Activated CD8-positive, alpha-beta T cell treated with anti-CD3 and anti-CD28 coated beads for 36 hours (primary cell): ENCODE measurements at regions of chr10 and their contacts with region 1.

Region 1: GRCh38 chr10:119750391-119751230 is 24.8 kb downstream of the INPP5F start:
- DNase-seq: peak; percentile 77
- ATAC-seq: peak; percentile 99
- H3K4me3 Mint-ChIP-seq: no peak overlapping the region
- H3K27ac Mint-ChIP-seq: no peak overlapping the region
- H3K4me1 Mint-ChIP-seq: peaks cover 7% of the 10 kb centered on the region
- H3K27me3 Mint-ChIP-seq: no peaks in the 10 kb centered on the region
- CTCF ChIP-seq: peak; percentile 94

Region 2: GRCh38 chr10:119496273-119496672 is 254.3 kb before region 1 on chr10:
- CTCF ChIA-PET with region 1: no interaction called
- POLR2A ChIA-PET with region 1: no interaction called
- intact Hi-C with region 1: no loop called
- DNase-seq: peak; percentile 85
- ATAC-seq: peak; percentile 77
- H3K4me3 Mint-ChIP-seq: no peak overlapping the region
- H3K27ac Mint-ChIP-seq: peak overlapping the region; percentile 98
- H3K4me1 Mint-ChIP-seq: peaks cover 89% of the 10 kb centered on the region
- H3K27me3 Mint-ChIP-seq: no peaks in the 10 kb centered on the region
- CTCF ChIP-seq: no peak

Region 3: DNA sequence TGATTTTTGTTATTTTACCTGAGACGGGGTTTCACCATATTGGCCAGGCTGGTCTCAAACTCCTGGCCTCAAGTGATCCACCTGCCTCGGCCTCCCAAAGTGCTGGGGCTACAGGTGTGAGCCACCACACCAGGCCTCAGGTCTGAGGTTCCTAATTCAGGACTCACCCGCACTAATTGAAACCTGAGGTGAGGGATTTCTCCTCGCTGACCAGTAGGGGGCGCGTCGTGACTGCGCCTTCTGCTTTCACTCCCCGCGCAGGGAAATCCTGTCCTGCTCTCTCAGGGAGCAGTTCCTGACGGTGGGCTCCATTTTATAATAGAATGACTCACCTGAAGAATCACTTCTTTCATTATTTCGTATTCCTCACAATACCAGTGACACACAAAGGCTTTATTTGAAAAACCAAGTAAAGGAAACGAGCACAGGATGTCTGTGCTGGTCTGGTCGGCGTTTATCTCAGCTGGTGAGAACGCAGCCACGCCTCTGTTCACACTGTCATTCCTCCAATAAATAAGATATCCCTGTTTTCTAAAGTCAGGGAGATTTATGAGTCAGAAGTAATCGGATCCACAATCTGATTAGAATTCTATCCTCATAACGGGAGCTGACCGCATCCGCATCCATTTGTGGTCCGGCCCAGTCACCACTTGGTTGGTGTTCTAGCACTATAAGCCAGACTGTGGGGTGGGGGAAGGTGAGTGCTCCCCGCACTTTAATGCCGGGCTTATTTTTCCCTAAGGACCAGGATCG is 64.0 kb before region 1 on chr10:
- CTCF ChIA-PET with region 1: interaction called, 46 read pairs
- POLR2A ChIA-PET with region 1: no interaction called
- intact Hi-C with region 1: no loop called
- DNase-seq: peak; percentile 86
- ATAC-seq: peak; percentile 89
- H3K4me3 Mint-ChIP-seq: peak overlapping the region; percentile 21
- H3K27ac Mint-ChIP-seq: peak overlapping the region; percentile 77
- H3K4me1 Mint-ChIP-seq: peaks cover 20% of the 10 kb centered on the region
- H3K27me3 Mint-ChIP-seq: no peaks in the 10 kb centered on the region
- CTCF ChIP-seq: peak; percentile 98

Region 4: GRCh38 chr10:119725828-119726675 is 24.6 kb before region 1 on chr10 and contains the start of gene INPP5F:
- CTCF ChIA-PET with region 1: interaction called, 42 read pairs
- POLR2A ChIA-PET with region 1: no interaction called
- intact Hi-C with region 1: no loop called
- DNase-seq: peak; percentile 99
- ATAC-seq: peak; percentile 98
- H3K4me3 Mint-ChIP-seq: peak within 1 kb of the TSS; percentile 82
- H3K27ac Mint-ChIP-seq: peak within 1 kb of the TSS; percentile 76
- H3K4me1 Mint-ChIP-seq: peaks cover 41% of the 10 kb centered on the region
- H3K27me3 Mint-ChIP-seq: no peaks in the 10 kb centered on the region
- CTCF ChIP-seq: peak; percentile 43
- total RNA-seq, gene INPP5F: 10.7 TPM

Region 5: GRCh38 chr10:119761106-119761505 is 10.5 kb after region 1 on chr10:
- CTCF ChIA-PET with region 1: interaction called, 13 read pairs
- POLR2A ChIA-PET with region 1: no interaction called
- intact Hi-C with region 1: no loop called
- DNase-seq: no peak
- ATAC-seq: no peak
- H3K4me3 Mint-ChIP-seq: no peak overlapping the region
- H3K27ac Mint-ChIP-seq: no peak overlapping the region
- H3K4me1 Mint-ChIP-seq: peaks cover 14% of the 10 kb centered on the region
- H3K27me3 Mint-ChIP-seq: no peaks in the 10 kb centered on the region
- CTCF ChIP-seq: no peak

Region 6: GRCh38 chr10:119807960-119808697 is 57.5 kb after region 1 on chr10:
- CTCF ChIA-PET with region 1: interaction called, 19 read pairs
- POLR2A ChIA-PET with region 1: no interaction called
- intact Hi-C with region 1: no loop called
- DNase-seq: peak; percentile 12
- ATAC-seq: peak; percentile 58
- H3K4me3 Mint-ChIP-seq: no peak overlapping the region
- H3K27ac Mint-ChIP-seq: peak overlapping the region; percentile 3
- H3K4me1 Mint-ChIP-seq: peaks cover 3% of the 10 kb centered on the region
- H3K27me3 Mint-ChIP-seq: no peaks in the 10 kb centered on the region
- CTCF ChIP-seq: no peak

Region 7: GRCh38 chr10:120184547-120185337 is 434.1 kb after region 1 on chr10:
- CTCF ChIA-PET with region 1: no interaction called
- POLR2A ChIA-PET with region 1: no interaction called
- intact Hi-C with region 1: no loop called
- DNase-seq: no peak
- ATAC-seq: no peak
- H3K4me3 Mint-ChIP-seq: no peak overlapping the region
- H3K27ac Mint-ChIP-seq: no peak overlapping the region
- H3K4me1 Mint-ChIP-seq: no peaks in the 10 kb centered on the region
- H3K27me3 Mint-ChIP-seq: peaks cover 6% of the 10 kb centered on the region
- CTCF ChIP-seq: no peak

Region 8: DNA sequence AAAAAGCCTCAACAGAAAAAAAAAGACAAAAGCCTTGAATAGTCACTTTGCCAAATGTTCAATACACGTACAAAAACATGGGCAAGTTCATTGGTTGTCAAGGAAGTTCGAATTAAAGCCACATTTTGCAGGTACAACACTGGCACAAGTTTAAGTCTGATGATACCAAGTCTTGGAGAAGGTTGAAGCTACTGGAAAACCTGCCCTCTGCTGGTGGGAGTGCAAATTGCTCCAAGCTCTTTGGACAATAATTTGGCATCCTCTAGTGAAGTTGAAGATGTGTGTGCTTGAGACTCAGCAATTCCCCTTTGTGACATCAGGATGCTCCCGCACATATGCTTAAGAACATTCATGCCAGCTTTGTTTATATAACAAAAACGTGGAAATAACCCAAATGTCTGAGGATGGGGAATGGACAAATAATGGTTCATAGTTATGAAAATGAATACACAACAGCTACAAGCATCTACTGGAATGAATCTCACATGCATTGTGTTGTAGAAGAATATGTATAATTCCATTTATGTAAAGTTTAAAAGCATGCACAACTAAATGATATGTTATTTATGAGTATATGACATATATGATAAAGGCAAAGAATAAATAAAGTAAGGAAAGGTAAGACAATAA is 586.4 kb after region 1 on chr10:
- CTCF ChIA-PET with region 1: interaction called, 11 read pairs
- POLR2A ChIA-PET with region 1: no interaction called
- intact Hi-C with region 1: no loop called
- DNase-seq: peak; percentile 72
- ATAC-seq: no peak
- H3K4me3 Mint-ChIP-seq: no peak overlapping the region
- H3K27ac Mint-ChIP-seq: no peak overlapping the region
- H3K4me1 Mint-ChIP-seq: no peaks in the 10 kb centered on the region
- H3K27me3 Mint-ChIP-seq: peaks cover 4% of the 10 kb centered on the region
- CTCF ChIP-seq: peak; percentile 78